ENCODE measurements at regions of chr12 and their contacts with region 1.

Region 1: DNA sequence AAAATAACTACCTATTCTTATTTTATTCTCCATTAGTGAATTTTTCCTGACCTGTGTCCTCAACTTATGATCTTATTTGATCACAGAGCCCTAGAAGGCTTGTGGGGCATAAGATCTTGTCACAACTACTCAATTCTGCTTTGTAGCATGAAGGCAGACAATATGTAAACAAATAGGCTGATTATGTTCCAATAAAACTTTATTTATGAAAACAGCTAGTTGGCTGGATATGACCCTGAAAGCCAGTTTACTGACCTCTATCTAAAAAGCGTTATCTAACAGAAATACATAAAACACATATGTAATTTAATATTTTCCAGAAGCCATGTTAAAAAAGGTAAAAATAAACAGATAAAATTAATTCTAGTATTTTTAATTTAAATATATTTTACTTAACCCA is 17.4 kb downstream of the HECTD4 start:
- DNase-seq: no peak
- ATAC-seq: no peak
- H3K4me3 ChIP-seq: no peak overlapping the region
- H3K27ac ChIP-seq: peak overlapping the region; percentile 40; the same call in 1 of the 3 replicates
- H3K4me1 ChIP-seq: peaks cover 2 to 4% of the 10 kb centered on the region in 2 experiments; a peak in 3 of 5 replicates
- H3K27me3 ChIP-seq: no peaks in the 10 kb centered on the region
- CTCF ChIP-seq: no peak
- EP300 ChIP-seq: no peak
- POLR2A ChIP-seq: no peak
- RAD21 ChIP-seq: no peak

Region 2: DNA sequence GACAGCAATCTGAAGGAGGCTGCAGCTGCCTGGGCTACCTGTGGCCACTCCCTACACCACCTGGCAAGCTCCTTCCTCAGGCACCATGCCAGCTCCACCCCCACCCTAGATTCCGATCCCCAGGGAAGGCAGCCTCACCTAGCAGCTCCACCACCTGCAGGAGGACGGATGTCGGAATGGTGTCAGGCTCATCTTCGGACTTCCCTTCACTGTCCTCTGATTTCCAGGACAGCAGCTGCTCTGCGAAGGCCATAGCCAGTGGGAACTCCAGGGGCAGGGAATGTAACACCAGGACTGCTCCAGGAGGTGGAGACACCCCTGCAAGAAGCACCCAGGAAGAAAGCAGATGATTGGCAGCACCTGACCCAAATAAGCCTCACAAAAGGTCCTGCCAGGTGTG is 174.2 kb before region 1 on chr12:
- CTCF ChIA-PET with region 1: no interaction called
- POLR2A ChIA-PET with region 1: no interaction called
- in situ Hi-C with region 1: no loop called
- intact Hi-C with region 1: no loop called
- DNase-seq: no peak
- ATAC-seq: no peak
- H3K4me3 ChIP-seq: no peak overlapping the region
- H3K27ac ChIP-seq: no peak overlapping the region
- H3K4me1 ChIP-seq: no peaks in the 10 kb centered on the region
- H3K27me3 ChIP-seq: no peaks in the 10 kb centered on the region
- CTCF ChIP-seq: no peak
- EP300 ChIP-seq: no peak
- POLR2A ChIP-seq: no peak
- RAD21 ChIP-seq: no peak

Region 3: DNA sequence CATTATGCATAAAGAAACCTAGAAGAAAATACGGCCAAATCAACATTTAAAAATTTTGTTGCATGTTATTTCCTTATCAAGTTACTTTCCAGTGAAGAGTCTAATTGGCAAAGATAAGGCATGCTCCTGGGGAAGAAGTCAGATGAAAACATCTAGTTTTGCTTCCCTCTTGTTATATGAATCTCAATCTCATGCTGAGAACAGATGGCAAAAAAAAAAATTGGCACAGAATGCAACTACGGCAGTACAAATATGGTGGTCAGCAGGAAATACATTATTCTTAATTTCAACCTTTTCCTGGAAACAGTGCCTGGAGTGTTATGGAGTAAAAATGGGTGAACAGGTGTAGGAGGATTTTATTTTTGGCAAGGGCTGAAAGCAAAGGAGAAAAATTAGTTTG is 15.4 kb before region 1 on chr12:
- CTCF ChIA-PET with region 1: no interaction called
- POLR2A ChIA-PET with region 1: interaction called, 10 read pairs
- in situ Hi-C with region 1: no loop called
- intact Hi-C with region 1: no loop called
- DNase-seq: no peak
- ATAC-seq: no peak
- H3K4me3 ChIP-seq: no peak overlapping the region
- H3K27ac ChIP-seq: no peak overlapping the region
- H3K4me1 ChIP-seq: peaks cover 41 to 45% of the 10 kb centered on the region in 2 experiments
- H3K27me3 ChIP-seq: no peaks in the 10 kb centered on the region
- CTCF ChIP-seq: no peak
- EP300 ChIP-seq: no peak
- POLR2A ChIP-seq: no peak
- RAD21 ChIP-seq: no peak

Region 4: GRCh38 chr12:112409064-112409905 is 44.5 kb after region 1 on chr12 and contains the start of gene RPL6:
- CTCF ChIA-PET with region 1: no interaction called
- POLR2A ChIA-PET with region 1: no interaction called
- in situ Hi-C with region 1: no loop called
- intact Hi-C with region 1: no loop called
- DNase-seq: peak; percentile 78 to 95 (median 84)
- ATAC-seq: peak; percentile 90
- H3K4me3 ChIP-seq: peak within 1 kb of the TSS; percentile 90
- H3K27ac ChIP-seq: peak within 1 kb of the TSS; percentile 96
- H3K4me1 ChIP-seq: peaks cover 7 to 16% of the 10 kb centered on the region in 2 experiments; a peak in 4 of 5 replicates
- H3K27me3 ChIP-seq: no peaks in the 10 kb centered on the region
- CTCF ChIP-seq: no peak
- EP300 ChIP-seq: peak; percentile 17; the same call in 1 of the 2 replicates
- POLR2A ChIP-seq: peak; percentile 99
- RAD21 ChIP-seq: no peak
- polyA plus RNA-seq, gene RPL6: 1,519 to 1,617 TPM